ENCODE measurements at regions of chr15 and their contacts with region 1.

Region 1: DNA sequence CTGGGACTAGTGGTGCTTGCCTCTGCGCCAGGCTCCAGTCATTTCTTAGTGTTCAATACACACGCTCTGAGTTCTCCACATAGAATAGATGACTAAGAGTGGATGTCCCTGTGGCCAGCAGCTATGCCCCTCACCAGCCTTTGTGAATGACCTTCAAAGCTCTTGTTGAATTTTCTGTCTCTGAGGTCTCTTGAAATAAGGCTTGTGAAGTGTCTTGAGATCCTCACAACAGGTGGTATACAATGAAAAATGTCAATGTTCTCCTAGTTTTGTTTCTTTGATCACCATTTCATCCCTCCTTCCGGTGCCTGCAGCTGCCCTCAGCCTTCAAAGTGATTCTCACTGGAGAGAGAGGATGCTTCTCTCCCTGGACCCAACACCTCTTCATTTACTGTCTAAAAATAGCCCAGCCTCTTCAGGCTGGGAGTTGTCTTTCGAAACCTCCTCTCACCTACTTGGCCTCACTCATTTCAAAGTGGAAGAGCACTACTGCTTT is 5.4 kb downstream of the MAPKBP1 start:
- H3K4me3 ChIP-seq: no peak overlapping the region
- H3K27ac ChIP-seq: no peak overlapping the region
- H3K4me1 ChIP-seq: peaks cover 8% of the 10 kb centered on the region; the same call in 1 of the 2 replicates
- CTCF ChIP-seq: no peak

Region 2: GRCh38 chr15:42427429-42428223 is 647.9 kb after region 1 on chr15:
- CTCF ChIA-PET with region 1: no interaction called
- POLR2A ChIA-PET with region 1: interaction called, 10 read pairs
- H3K4me3 ChIP-seq: no peak overlapping the region
- H3K27ac ChIP-seq: no peak overlapping the region
- H3K4me1 ChIP-seq: no peaks in the 10 kb centered on the region
- CTCF ChIP-seq: no peak

Measured in HEK293 (cell line).